ENCODE measurements at regions of chr1 and their contacts with region 1.

Region 1: GRCh38 chr1:24964811-24965570 is 34.9 kb upstream of the RUNX3 start:
- DNase-seq: peak; percentile 87 to 97
- ATAC-seq: peak; percentile 79 to 95 (median 91)
- H3K4me3 ChIP-seq: peak overlapping the region; percentile 39
- H3K4me3 Mint-ChIP-seq: peak overlapping the region; percentile 93
- H3K27ac ChIP-seq: peak overlapping the region; percentile 83
- H3K27ac Mint-ChIP-seq: peak overlapping the region; percentile 91 to 93
- H3K4me1 ChIP-seq: peaks cover 74% of the 10 kb centered on the region
- H3K4me1 Mint-ChIP-seq: peaks cover 23 to 34% of the 10 kb centered on the region in 2 donors
- H3K27me3 ChIP-seq: no peaks in the 10 kb centered on the region
- H3K27me3 Mint-ChIP-seq: peaks cover 10 to 22% of the 10 kb centered on the region in 2 donors
- CTCF ChIP-seq: no peak

Region 2: DNA sequence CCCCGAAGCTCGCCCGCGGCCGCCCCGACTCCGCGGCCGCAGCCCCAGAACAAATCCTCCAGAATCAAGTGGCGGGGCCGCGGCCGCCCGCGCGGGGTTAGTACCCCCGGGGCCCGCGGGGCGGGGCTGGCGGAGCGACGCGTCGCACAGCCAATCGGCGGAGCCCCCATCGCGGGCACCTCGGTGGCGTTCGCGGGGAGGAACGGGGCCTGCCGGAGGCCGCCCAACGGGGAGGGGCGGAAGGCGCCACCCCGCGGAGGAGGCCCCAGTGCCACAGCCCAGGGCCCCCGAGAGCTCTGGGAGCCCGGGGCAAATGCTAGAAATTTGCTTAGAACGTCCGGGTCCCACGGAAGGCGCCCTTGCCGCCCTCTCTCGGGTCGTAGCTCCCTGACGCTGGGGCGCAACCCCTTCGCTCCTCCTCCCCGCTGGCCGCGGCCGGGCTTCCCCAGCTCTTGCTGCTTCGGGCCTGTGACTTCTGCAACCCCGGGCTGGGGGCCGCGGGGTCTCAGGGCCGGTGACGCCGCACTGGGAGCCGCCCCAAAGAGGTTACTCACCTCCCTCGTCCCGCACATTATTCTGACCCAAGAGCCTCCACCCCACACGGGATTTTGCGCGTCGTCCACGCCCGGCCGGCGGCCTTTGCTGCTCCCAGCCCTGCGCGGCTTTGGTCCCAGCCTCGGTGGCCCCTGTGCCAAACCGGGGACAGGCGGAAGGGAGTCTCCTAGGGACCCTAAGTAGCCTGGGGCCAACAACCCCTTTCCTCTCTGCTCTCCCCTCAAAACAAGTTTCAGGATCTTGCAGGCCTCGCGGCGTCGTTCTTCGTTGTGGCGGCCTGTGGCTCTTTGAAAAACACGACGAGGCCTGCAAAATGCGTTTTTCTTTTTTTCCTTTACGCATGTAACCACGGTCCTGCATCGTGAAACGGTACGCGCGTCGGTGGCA is 34.5 kb before region 1 on chr1 and contains the start of gene RUNX3:
- intact Hi-C with region 1: loop called (anchors 2 kb)
- DNase-seq: peak; percentile 94 to 97
- ATAC-seq: peak; percentile 70 to 88 (median 77)
- H3K4me3 ChIP-seq: peak within 1 kb of the TSS; percentile 94
- H3K4me3 Mint-ChIP-seq: peak within 1 kb of the TSS; percentile 97
- H3K27ac ChIP-seq: peak within 1 kb of the TSS; percentile 100
- H3K27ac Mint-ChIP-seq: peak within 1 kb of the TSS; percentile 99
- H3K4me1 ChIP-seq: peaks cover 65% of the 10 kb centered on the region
- H3K4me1 Mint-ChIP-seq: peaks cover 41 to 56% of the 10 kb centered on the region in 2 donors
- H3K27me3 ChIP-seq: no peaks in the 10 kb centered on the region
- H3K27me3 Mint-ChIP-seq: peaks cover 0 to 9% of the 10 kb centered on the region in 2 donors
- CTCF ChIP-seq: no peak
- total RNA-seq, gene RUNX3: 537 to 630 (median 601) TPM

Region 3: GRCh38 chr1:24996983-24997893 is 32.2 kb after region 1 on chr1:
- intact Hi-C with region 1: loop called (anchors 5 kb)
- DNase-seq: peak; percentile 38 to 73
- ATAC-seq: peak; percentile 38 to 60 (median 53)
- H3K4me3 ChIP-seq: no peak overlapping the region
- H3K4me3 Mint-ChIP-seq: peak overlapping the region; percentile 58
- H3K27ac ChIP-seq: peak overlapping the region; percentile 58
- H3K27ac Mint-ChIP-seq: peak overlapping the region; percentile 84 to 85
- H3K4me1 ChIP-seq: peaks cover 94% of the 10 kb centered on the region
- H3K4me1 Mint-ChIP-seq: peaks cover 66 to 73% of the 10 kb centered on the region in 2 donors
- H3K27me3 ChIP-seq: no peaks in the 10 kb centered on the region
- H3K27me3 Mint-ChIP-seq: no peaks in the 10 kb centered on the region
- CTCF ChIP-seq: no peak

Region 4: GRCh38 chr1:25037174-25038074 is 72.4 kb after region 1 on chr1:
- intact Hi-C with region 1: loop called (anchors 2 kb)
- DNase-seq: peak in 1 of 2 donors; percentile 83
- ATAC-seq: no peak
- H3K4me3 ChIP-seq: no peak overlapping the region
- H3K4me3 Mint-ChIP-seq: no peak overlapping the region
- H3K27ac ChIP-seq: no peak overlapping the region
- H3K27ac Mint-ChIP-seq: peak overlapping the region in 1 of 2 donors; percentile 25
- H3K4me1 ChIP-seq: peaks cover 81% of the 10 kb centered on the region
- H3K4me1 Mint-ChIP-seq: peaks cover 38 to 45% of the 10 kb centered on the region in 2 donors
- H3K27me3 ChIP-seq: no peaks in the 10 kb centered on the region
- H3K27me3 Mint-ChIP-seq: peaks cover 14 to 17% of the 10 kb centered on the region in 2 donors
- CTCF ChIP-seq: peak; percentile 32

Region 5: DNA sequence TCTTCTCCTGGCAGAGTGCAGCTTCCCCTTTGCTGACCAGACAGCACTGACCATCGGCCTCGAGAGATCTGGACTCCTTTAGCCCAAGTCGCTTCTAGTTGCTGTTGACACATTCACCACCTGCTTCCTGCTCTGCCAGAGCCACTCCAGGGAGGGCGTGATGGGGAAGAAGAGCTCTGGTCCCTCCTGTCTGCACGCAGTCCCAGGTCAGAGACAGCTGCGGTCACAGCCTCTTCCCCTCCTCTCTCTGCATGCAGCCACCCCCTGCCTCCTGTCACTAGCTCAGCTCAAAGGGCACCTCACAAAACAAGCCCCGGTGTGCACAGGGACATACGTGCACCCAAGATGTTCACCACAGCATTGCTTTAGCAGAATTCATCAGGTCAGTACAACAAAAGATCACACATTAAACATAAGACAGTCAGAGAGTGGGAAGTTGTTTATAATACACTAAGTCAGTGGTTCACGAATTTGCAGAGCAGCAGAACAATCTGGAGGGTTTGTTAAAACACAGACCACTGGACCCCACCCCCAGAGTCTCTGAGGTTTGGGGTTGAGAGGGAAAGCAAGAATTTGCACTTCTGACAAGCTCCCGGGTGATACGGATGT is 134.5 kb after region 1 on chr1:
- intact Hi-C with region 1: loop called (anchors 2 kb)
- DNase-seq: peak; percentile 64 to 71
- ATAC-seq: peak; percentile 60 to 77 (median 74)
- H3K4me3 ChIP-seq: peak overlapping the region; percentile 2
- H3K4me3 Mint-ChIP-seq: peak overlapping the region; percentile 78
- H3K27ac ChIP-seq: peak overlapping the region; percentile 54
- H3K27ac Mint-ChIP-seq: peak overlapping the region; percentile 75 to 84
- H3K4me1 ChIP-seq: peaks cover 77% of the 10 kb centered on the region
- H3K4me1 Mint-ChIP-seq: peaks cover 65 to 74% of the 10 kb centered on the region in 2 donors
- H3K27me3 ChIP-seq: no peaks in the 10 kb centered on the region
- H3K27me3 Mint-ChIP-seq: peaks cover 30 to 44% of the 10 kb centered on the region in 2 donors
- CTCF ChIP-seq: no peak